CD14-positive monocyte (primary cell): ENCODE measurements at regions of chr6 and their contacts with region 1.

Region 1: GRCh38 chr6:31940256-31940664 is 5.6 kb upstream of the CFB start:
- DNase-seq: no peak
- H3K4me3 ChIP-seq: no peak overlapping the region
- H3K4me3 Mint-ChIP-seq: no peak overlapping the region
- H3K27ac ChIP-seq: no peak overlapping the region
- H3K27ac Mint-ChIP-seq: no peak overlapping the region
- H3K4me1 ChIP-seq: peaks cover 0 to under 1% of the 10 kb centered on the region in 2 donors
- H3K4me1 Mint-ChIP-seq: peaks cover 2% of the 10 kb centered on the region
- H3K27me3 ChIP-seq: no peaks in the 10 kb centered on the region
- H3K27me3 Mint-ChIP-seq: peaks cover 9 to 21% (median 19%) of the 10 kb centered on the region in 3 donors
- CTCF ChIP-seq: no peak

Region 2: GRCh38 chr6:31882344-31882743 is 57.9 kb before region 1 on chr6:
- intact Hi-C with region 1: no loop called
- DNase-seq: no peak
- H3K4me3 ChIP-seq: no peak overlapping the region
- H3K4me3 Mint-ChIP-seq: no peak overlapping the region
- H3K27ac ChIP-seq: no peak overlapping the region
- H3K27ac Mint-ChIP-seq: peak overlapping the region in 1 of 7 donors; percentile 57
- H3K4me1 ChIP-seq: no peaks in the 10 kb centered on the region
- H3K4me1 Mint-ChIP-seq: no peaks in the 10 kb centered on the region
- H3K27me3 ChIP-seq: no peaks in the 10 kb centered on the region
- H3K27me3 Mint-ChIP-seq: no peaks in the 10 kb centered on the region
- CTCF ChIP-seq: no peak

Region 3: GRCh38 chr6:31908791-31909190 is 31.5 kb before region 1 on chr6:
- intact Hi-C with region 1: loop called in 1 of 2 experiments (anchors 5 kb)
- DNase-seq: no peak
- H3K4me3 ChIP-seq: no peak overlapping the region
- H3K4me3 Mint-ChIP-seq: no peak overlapping the region
- H3K27ac ChIP-seq: no peak overlapping the region
- H3K27ac Mint-ChIP-seq: no peak overlapping the region
- H3K4me1 ChIP-seq: peaks cover 6 to 7% of the 10 kb centered on the region in 2 donors
- H3K4me1 Mint-ChIP-seq: peaks cover 13% of the 10 kb centered on the region
- H3K27me3 ChIP-seq: no peaks in the 10 kb centered on the region
- H3K27me3 Mint-ChIP-seq: peaks cover 4 to 20% (median 9%) of the 10 kb centered on the region in 3 donors
- CTCF ChIP-seq: no peak